ENCODE measurements at regions of chr6 and their contacts with region 1.

Region 1: GRCh38 chr6:28136585-28137504 is 4.8 kb upstream of the ZKSCAN8 start:
- DNase-seq: peak; percentile 90
- ATAC-seq: peak; percentile 59
- H3K4me3 ChIP-seq: peak overlapping the region; percentile 91
- H3K27ac ChIP-seq: peak overlapping the region; percentile 52
- H3K4me1 ChIP-seq: peaks cover 14% of the 10 kb centered on the region
- H3K27me3 ChIP-seq: no peaks in the 10 kb centered on the region
- CTCF ChIP-seq: no peak

Region 2: GRCh38 chr6:27902335-27903314 is 234.2 kb before region 1 on chr6:
- CTCF ChIA-PET with region 1: no interaction called
- POLR2A ChIA-PET with region 1: no interaction called
- intact Hi-C with region 1: loop called (anchors 10 kb)
- DNase-seq: peak; percentile 90
- ATAC-seq: peak; percentile 89
- H3K4me3 ChIP-seq: peak overlapping the region; percentile 72
- H3K27ac ChIP-seq: peak overlapping the region; percentile 5; the same call in 1 of the 2 replicates
- H3K4me1 ChIP-seq: no peaks in the 10 kb centered on the region
- H3K27me3 ChIP-seq: no peaks in the 10 kb centered on the region
- CTCF ChIP-seq: no peak

Region 3: DNA sequence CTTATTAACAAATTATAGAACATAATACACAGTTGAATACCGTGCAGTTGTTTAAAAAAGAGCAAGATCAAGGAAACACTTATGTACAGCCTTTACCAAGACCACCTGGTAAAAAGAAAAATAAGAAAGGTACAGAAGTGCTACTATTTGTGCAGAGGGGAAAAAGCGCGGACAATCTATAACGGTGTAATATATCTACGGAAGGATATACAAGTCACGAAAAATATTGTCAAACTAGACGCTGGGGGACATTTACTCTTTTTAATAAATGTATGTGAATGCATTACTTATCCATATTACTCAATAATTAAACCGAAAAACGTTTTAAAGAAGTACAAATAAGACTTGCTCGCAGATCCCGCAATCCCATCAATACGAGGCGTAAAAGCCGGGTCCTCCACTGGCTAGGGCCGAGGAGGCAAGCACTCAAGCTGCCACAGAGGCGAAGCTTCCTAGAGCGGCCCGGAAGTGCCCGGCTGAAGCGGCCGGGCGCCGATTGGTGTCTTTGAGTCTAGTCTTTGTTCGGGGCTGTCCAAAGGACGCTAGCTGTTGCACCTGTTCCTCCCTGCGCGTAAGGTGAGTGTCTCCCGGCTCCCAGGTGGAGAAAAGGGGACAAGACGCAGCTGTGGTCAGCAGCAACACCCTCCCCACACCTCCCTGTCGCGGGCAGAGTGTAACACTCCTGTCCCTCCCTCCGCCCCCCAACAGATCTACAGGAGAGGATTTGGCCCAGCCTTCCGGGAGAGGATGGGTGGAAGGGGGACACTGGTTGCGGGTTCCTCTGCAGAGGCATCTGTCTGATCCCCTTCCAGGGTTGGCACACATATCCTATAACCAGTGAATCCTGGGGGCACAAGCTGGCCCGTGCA is 12.5 kb before region 1 on chr6 and contains the start of gene ZSCAN16:
- CTCF ChIA-PET with region 1: no interaction called
- POLR2A ChIA-PET with region 1: no interaction called
- intact Hi-C with region 1: loop called (anchors 1 kb)
- DNase-seq: peak; percentile 91
- ATAC-seq: peak; percentile 99
- H3K4me3 ChIP-seq: peak within 1 kb of the TSS; percentile 85
- H3K27ac ChIP-seq: no peak within 1 kb of the TSS
- H3K4me1 ChIP-seq: peaks cover 9% of the 10 kb centered on the region; the same call in 1 of the 2 replicates
- H3K27me3 ChIP-seq: no peaks in the 10 kb centered on the region
- CTCF ChIP-seq: no peak
- total RNA-seq, gene ZSCAN16: 4.5 and 8.1 TPM in 2 replicates

Region 4: DNA sequence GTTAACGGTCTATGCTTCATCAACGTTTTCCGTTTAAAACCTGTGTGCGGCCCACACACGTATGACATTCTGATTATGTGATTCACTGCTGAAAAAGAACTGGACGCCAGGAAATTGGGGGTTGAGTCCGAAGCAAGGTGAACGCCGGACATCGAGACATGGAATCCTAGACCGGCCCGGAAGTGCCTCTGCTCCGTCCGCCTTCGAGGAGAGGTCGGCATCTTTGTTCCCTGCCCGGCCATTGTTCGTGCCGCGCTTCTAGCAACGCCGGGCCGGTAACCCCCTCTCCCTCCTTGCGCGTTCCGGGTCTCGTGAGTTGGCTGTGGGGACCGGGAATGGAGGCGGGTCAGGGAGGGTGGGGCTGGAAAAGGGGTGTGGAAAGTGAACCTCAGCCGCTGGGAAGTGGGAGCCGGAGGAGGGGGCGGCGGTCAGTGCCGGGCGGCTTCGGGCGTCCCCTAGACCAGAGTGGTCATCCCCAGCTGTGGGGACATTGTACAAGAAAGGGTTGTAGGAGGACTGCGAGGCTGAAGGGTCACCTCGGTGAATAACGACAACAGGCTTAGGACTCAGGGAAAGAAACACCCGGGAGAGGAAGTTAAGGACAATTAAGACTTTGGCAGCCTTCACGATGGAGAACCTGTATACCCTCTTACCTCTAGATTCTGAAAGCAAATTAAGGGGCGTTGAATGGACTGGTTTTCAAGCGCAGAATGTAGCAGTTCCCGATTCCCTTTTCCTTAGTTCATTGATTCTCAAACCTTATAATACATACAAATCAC is 88.4 kb after region 1 on chr6 and contains the start of gene ZSCAN9:
- CTCF ChIA-PET with region 1: no interaction called
- POLR2A ChIA-PET with region 1: no interaction called
- intact Hi-C with region 1: loop called (anchors 2 kb)
- DNase-seq: peak; percentile 93
- ATAC-seq: peak; percentile 93
- H3K4me3 ChIP-seq: peak within 1 kb of the TSS; percentile 92
- H3K27ac ChIP-seq: peak within 1 kb of the TSS; percentile 42
- H3K4me1 ChIP-seq: peaks cover 20% of the 10 kb centered on the region
- H3K27me3 ChIP-seq: no peaks in the 10 kb centered on the region
- CTCF ChIP-seq: no peak
- total RNA-seq, gene ZSCAN9: 10.8 and 11.7 TPM in 2 replicates

Region 5: GRCh38 chr6:28266962-28267694 is 130.3 kb after region 1 on chr6 and contains the start of gene ZSCAN26:
- CTCF ChIA-PET with region 1: no interaction called
- POLR2A ChIA-PET with region 1: no interaction called
- intact Hi-C with region 1: loop called (anchors 5 kb)
- DNase-seq: peak; percentile 93
- ATAC-seq: peak; percentile 91
- H3K4me3 ChIP-seq: peak within 1 kb of the TSS; percentile 86
- H3K27ac ChIP-seq: peak within 1 kb of the TSS; percentile 48
- H3K4me1 ChIP-seq: peaks cover 28% of the 10 kb centered on the region
- H3K27me3 ChIP-seq: no peaks in the 10 kb centered on the region
- CTCF ChIP-seq: no peak
- total RNA-seq, gene ZSCAN26: 10.8 and 12.3 TPM in 2 replicates

Region 6: DNA sequence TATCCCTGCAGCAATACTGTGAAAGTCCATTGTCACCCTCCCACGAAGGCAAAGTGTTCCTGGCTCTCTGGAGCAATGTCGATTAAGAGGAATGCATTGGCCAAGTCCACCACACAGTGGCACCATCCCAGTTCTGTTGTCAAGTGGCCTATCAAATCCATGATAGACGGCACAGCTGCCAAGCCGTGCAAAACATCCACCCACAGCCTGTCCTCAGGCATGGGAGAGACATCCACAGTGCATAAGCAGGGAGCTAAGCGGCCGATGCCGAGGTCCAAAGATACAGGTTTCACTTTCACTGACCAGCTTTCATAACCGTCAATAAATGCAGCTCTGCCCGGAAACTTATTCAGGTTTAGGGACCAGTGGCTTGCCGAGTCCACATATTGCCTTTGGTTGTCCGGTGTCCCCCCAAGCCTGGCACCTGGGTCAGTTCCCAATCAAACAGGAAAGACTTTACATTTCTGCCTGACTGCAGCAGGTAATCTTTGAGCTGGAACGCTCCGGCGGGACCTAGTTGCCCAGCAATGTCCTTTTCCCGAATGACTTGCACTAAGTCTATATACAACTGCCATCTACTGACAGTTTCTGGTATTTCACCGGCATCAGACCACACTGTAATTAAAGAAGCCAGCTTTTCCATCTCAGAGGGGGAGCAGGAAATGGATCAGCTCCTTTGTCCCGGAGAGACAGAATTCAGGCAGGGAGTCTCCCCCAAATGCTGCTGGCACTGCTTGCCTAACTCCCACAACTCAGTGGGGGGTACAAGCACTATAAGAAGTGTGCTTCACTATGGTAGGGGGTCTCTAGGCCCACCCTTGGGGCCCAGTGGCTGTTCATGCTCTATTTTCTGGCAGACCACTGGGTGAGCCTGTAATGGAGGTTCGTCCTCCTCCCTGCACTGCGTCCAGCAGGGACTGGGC is 219.2 kb after region 1 on chr6:
- CTCF ChIA-PET with region 1: no interaction called
- POLR2A ChIA-PET with region 1: interaction called, 4 read pairs
- intact Hi-C with region 1: loop called (anchors 1 kb)
- DNase-seq: peak; percentile 95
- ATAC-seq: peak; percentile 46
- H3K4me3 ChIP-seq: peak overlapping the region; percentile 84
- H3K27ac ChIP-seq: peak overlapping the region; percentile 87
- H3K4me1 ChIP-seq: peaks cover 49% of the 10 kb centered on the region
- H3K27me3 ChIP-seq: no peaks in the 10 kb centered on the region
- CTCF ChIP-seq: peak; percentile 77

Region 7: DNA sequence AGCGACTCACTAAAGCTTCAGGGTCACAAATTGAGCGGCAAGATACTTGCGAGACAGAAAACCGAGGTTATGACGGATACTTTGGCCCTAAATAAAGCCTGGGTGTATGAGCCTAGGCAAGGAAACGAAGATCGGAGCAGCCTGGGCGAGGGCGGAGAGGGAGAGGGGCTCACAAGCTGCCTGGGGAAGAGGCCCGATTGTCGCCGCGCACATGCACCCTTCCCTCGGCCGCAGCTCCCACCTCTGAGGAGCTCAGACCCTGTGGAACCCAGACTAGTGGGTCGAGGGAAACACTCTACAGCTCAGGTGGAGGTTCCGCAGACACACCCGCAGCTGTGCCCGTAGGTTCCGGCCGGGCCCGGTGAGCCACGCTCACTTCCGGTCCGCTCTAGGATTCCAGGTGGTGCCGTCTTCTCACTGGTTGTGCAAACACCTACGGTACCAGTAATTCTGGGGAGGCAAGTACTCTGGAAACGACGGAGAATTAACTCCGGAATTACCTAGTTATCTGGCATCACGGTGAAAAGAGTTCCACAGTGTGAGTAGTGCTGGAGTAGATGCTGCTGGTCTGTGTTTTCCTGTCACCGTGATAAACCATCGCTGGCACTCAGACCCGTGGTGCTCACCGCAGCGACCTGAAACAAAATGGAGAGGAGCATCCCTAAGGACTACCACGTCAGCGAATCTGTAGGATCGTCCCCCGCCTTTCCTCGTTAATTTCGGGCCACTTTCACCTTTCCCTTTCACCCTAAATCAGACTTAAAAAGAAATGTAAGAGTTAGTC is 450.3 kb after region 1 on chr6:
- CTCF ChIA-PET with region 1: no interaction called
- POLR2A ChIA-PET with region 1: no interaction called
- intact Hi-C with region 1: loop called (anchors 10 kb)
- DNase-seq: peak; percentile 85
- ATAC-seq: peak; percentile 98
- H3K4me3 ChIP-seq: peak overlapping the region; percentile 89
- H3K27ac ChIP-seq: peak overlapping the region; percentile 33
- H3K4me1 ChIP-seq: peaks cover 24% of the 10 kb centered on the region
- H3K27me3 ChIP-seq: no peaks in the 10 kb centered on the region
- CTCF ChIP-seq: no peak

Region 8: DNA sequence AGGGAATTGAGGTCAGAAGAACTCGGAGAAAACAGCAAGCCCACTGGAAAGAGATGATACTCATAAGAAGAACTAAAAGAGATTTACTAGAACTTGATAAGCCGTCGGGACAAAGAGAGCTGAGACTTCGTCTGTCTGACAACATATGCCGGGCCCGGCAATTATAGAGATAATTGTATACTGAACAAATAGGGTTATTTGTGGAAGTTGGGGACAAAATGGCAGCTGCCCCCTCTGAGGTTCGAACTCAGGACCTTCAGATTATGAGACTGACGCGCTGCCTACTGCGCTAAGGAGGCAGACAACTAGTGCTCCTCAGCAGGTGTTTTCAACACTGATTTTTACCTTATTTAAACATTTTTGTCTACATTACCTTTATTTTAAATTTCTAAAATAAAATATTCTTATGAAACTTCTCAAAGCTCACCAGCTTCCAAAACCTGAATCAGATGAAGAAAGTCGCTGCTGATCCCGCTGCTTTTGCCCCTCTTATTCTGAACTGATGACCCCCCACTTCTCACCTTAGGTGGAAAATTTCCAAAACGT is 816.3 kb after region 1 on chr6:
- CTCF ChIA-PET with region 1: no interaction called
- POLR2A ChIA-PET with region 1: no interaction called
- intact Hi-C with region 1: no loop called
- DNase-seq: peak; percentile 85
- ATAC-seq: peak; percentile 73
- H3K4me3 ChIP-seq: peak overlapping the region; percentile 82
- H3K27ac ChIP-seq: 0 out of 2 replicates have a peak overlapping the region, but pooled peaks have one; percentile 13
- H3K4me1 ChIP-seq: peaks cover 14% of the 10 kb centered on the region
- H3K27me3 ChIP-seq: no peaks in the 10 kb centered on the region
- CTCF ChIP-seq: no peak